Caco-2 (cell line): ENCODE measurements at regions of chr20 and their contacts with region 1.

Region 1: GRCh38 chr20:18276821-18277220 is 11.5 kb upstream of the ZNF133 start:
- DNase-seq: peak; percentile 85 to 88
- H3K4me3 ChIP-seq: no peak overlapping the region
- H3K4me3 Mint-ChIP-seq: no peak overlapping the region
- H3K27ac Mint-ChIP-seq: no peak overlapping the region
- H3K4me1 ChIP-seq: no peaks in the 10 kb centered on the region
- H3K4me1 Mint-ChIP-seq: peaks cover 8% of the 10 kb centered on the region
- H3K27me3 ChIP-seq: no peaks in the 10 kb centered on the region
- H3K27me3 Mint-ChIP-seq: peaks cover 6% of the 10 kb centered on the region
- CTCF ChIP-seq: peak; percentile 86 to 94

Region 2: DNA sequence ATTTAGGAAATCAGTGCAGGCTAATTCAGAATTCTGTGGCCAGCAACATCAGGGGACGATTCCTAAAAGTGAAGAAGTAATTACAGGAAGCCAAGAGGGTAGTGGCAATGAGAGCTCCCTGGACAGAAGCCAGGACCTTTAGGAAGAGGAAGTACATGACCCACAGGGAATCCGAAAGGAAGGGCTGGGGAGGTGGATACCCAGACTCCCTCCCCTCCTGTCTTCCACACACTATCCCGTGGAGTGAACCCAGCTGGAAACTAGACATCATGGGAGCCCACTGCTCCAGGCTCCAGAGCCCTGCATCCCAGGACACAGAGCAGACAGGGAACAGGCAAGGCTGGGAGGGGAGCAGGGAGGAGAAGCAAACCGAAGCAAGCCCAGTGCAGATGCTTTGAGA is 391.3 kb before region 1 on chr20:
- CTCF ChIA-PET with region 1: no interaction called
- POLR2A ChIA-PET with region 1: no interaction called
- intact Hi-C with region 1: no loop called
- DNase-seq: no peak
- H3K4me3 ChIP-seq: no peak overlapping the region
- H3K4me3 Mint-ChIP-seq: no peak overlapping the region
- H3K27ac Mint-ChIP-seq: no peak overlapping the region
- H3K4me1 ChIP-seq: no peaks in the 10 kb centered on the region
- H3K4me1 Mint-ChIP-seq: peaks cover 8% of the 10 kb centered on the region
- H3K27me3 ChIP-seq: no peaks in the 10 kb centered on the region
- H3K27me3 Mint-ChIP-seq: no peaks in the 10 kb centered on the region
- CTCF ChIP-seq: no peak

Region 3: DNA sequence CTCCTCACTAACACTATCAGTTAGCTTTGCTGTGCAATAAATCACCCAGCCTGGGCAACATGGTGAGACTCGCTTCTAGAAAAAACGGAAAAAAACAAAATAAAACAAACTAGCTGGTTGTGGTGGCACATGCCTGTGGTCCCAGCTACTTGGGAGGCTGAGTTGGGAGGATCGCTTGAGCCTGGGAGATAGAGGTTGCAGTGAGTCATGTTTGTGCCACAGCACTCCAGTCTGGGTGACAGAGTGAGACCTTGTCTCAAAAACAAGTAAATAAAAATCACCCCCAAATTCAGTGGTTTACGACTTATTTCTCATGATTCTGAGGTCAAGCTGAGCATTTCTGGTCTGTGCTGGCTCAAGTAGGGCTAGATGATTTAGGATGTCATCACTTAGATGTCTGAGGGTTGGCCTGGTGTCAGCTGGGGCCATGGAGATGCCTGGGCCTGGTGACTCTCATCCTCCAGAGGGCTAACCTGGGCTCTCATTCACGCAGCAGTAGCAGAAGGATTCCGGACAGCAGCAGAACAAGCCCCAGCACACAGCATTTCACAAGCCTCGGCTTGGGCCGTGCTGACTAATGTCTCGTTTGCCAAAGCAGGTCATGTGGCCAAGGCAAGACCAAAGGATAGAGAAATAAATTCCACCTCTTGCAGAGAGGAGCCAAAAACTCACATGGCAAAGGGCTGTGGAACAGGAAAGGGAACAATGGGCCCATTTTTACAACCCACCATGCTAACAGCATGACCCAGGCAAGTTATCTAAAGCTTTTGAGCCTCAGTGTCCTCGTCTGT is 275.5 kb before region 1 on chr20:
- CTCF ChIA-PET with region 1: no interaction called
- POLR2A ChIA-PET with region 1: no interaction called
- intact Hi-C with region 1: loop called (anchors 5 kb)
- DNase-seq: peak; percentile 70 to 77
- H3K4me3 ChIP-seq: no peak overlapping the region
- H3K4me3 Mint-ChIP-seq: no peak overlapping the region
- H3K27ac Mint-ChIP-seq: peak overlapping the region; percentile 76
- H3K4me1 ChIP-seq: peaks cover 40% of the 10 kb centered on the region
- H3K4me1 Mint-ChIP-seq: peaks cover 17% of the 10 kb centered on the region
- H3K27me3 ChIP-seq: no peaks in the 10 kb centered on the region
- H3K27me3 Mint-ChIP-seq: no peaks in the 10 kb centered on the region
- CTCF ChIP-seq: no peak

Region 4: DNA sequence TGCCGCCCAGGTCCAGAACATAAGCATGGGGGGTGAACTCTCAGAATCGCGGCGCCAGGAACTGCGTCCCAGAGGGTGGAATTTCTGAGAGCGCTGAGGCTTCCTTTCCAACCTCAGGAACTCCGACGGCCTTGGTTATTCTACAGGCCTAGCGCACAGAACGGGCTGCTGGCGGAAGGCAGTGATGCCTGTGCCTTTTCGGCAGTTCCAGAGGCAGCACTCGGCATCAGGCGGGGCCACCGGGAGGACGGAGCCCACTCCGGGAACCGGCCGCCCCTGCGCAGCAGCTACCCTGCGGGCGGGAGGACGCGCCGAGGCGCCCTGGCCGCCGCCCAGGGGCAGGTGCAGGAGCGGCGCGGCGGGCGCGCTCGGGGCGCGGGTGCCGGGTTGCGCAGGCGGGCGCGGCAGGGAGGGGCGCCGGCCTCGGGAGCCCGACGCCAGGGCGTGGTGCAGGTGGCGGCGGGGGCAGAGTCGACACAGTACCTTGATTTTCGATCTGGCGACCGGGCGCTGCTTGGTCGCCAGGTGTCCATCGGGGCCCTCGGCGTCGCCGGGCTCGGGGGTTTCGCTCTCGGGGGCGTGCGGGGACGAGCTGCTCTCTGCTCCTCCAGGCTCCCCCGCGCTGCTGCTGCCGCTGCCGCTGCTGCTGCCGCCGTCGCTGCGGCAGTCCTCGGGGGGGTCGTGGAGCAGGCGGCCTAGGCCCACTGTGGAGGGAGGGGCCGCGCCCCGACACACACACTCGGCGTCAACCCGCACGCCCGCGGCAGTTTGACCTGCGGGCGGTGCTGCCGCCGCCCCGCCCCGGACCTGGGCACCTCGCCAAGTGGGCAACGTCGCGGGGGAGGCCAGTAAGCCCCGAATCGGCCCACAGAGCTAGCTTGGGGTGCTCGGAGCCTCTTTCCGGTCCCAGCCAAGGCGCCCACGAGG is 220.4 kb before region 1 on chr20:
- CTCF ChIA-PET with region 1: no interaction called
- POLR2A ChIA-PET with region 1: no interaction called
- intact Hi-C with region 1: loop called (anchors 10 kb)
- DNase-seq: peak; percentile 49 to 63
- H3K4me3 ChIP-seq: peak overlapping the region; percentile 83
- H3K4me3 Mint-ChIP-seq: peak overlapping the region; percentile 85
- H3K27ac Mint-ChIP-seq: no peak overlapping the region
- H3K4me1 ChIP-seq: peaks cover 30% of the 10 kb centered on the region
- H3K4me1 Mint-ChIP-seq: peaks cover 29% of the 10 kb centered on the region
- H3K27me3 ChIP-seq: no peaks in the 10 kb centered on the region
- H3K27me3 Mint-ChIP-seq: no peaks in the 10 kb centered on the region
- CTCF ChIP-seq: no peak

Region 5: GRCh38 chr20:18190834-18191233 is 86.0 kb before region 1 on chr20:
- CTCF ChIA-PET with region 1: no interaction called
- POLR2A ChIA-PET with region 1: no interaction called
- intact Hi-C with region 1: loop called (anchors 5 kb)
- DNase-seq: no peak
- H3K4me3 ChIP-seq: no peak overlapping the region
- H3K4me3 Mint-ChIP-seq: no peak overlapping the region
- H3K27ac Mint-ChIP-seq: peak overlapping the region; percentile 65
- H3K4me1 ChIP-seq: peaks cover 14% of the 10 kb centered on the region
- H3K4me1 Mint-ChIP-seq: peaks cover 10% of the 10 kb centered on the region
- H3K27me3 ChIP-seq: no peaks in the 10 kb centered on the region
- H3K27me3 Mint-ChIP-seq: no peaks in the 10 kb centered on the region
- CTCF ChIP-seq: no peak